Head of caudate nucleus (tissue), 42 donors: ENCODE measurements at regions of chr6 and their contacts with region 1.

Region 1: GRCh38 chr6:36442671-36443470 is at the starts of genes KCTD20 and PXT1:
- DNase-seq: peak; percentile 66 to 96 (median 90)

Region 2: DNA sequence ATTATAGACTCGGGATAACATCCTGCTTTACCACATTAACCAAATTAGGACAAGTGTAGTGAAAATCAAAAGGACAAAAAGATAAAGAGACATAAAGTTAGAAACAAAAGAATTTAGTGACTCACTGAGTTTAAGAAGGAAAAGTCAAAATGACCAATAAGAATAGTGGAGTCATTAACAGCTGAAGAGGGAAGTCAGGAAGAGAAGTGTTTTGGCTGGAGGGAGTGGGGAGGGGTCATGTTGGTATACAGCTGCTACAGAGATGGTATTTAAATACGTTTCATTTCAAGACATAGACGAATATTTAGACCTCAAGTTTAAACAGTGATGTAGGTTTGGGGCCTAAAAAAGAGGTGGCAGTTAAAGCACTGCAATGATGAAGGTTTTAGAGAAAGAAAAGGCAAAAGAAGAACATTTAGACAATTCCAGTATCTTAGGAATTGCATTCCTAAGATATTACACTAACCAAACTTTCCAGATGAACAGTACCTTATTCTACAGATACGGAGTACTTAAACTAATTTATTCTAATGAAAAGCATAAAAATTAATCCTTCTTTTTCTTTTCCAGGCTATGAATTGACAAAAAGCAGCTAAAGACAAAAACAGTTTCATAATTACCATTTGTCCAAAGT is 764.7 kb before region 1 on chr6:
- intact Hi-C with region 1: no loop called
- DNase-seq: no peak

Region 3: DNA sequence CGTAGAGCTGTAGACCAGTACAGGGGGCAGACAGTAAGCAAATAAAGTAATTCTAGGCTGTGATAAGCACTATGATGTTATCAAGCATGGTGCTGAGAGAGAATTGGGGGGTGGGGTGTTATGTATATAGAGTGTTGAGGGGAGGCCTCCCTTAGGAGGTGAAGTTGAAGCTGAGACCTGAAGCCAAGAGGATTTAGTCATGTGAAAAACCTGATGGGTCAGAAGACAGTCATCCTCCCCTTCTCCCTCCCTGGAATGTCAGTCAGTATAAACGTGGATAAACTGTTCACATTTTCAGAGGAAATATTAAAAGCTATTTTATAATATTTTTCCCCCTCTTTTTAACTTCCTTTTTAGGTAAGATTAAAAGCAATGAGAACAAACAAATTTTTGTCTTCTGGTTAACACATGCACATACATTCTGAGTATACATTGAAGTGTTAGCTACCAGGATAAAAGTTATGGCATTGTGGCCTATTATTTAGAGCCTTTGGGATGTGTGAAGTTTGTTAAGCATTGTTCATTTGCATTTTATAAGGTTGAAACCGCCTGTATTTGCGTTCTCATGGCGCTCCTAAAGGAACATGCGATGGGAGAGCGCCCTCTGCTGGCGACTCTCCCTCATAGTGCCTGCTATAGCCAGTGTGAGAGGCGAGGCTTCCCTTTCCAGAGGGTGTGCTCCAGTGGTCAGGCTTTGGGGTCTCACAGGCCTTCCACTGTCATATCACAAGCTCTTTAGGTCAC is 347.9 kb before region 1 on chr6:
- intact Hi-C with region 1: no loop called
- DNase-seq: peak; percentile 51 to 95 (median 86)

Region 4: GRCh38 chr6:36386495-36387439 is 56.1 kb before region 1 on chr6:
- intact Hi-C with region 1: no loop called
- DNase-seq: peak in 23 of 42 donors; percentile 5 to 59 (median 22)

Region 5: DNA sequence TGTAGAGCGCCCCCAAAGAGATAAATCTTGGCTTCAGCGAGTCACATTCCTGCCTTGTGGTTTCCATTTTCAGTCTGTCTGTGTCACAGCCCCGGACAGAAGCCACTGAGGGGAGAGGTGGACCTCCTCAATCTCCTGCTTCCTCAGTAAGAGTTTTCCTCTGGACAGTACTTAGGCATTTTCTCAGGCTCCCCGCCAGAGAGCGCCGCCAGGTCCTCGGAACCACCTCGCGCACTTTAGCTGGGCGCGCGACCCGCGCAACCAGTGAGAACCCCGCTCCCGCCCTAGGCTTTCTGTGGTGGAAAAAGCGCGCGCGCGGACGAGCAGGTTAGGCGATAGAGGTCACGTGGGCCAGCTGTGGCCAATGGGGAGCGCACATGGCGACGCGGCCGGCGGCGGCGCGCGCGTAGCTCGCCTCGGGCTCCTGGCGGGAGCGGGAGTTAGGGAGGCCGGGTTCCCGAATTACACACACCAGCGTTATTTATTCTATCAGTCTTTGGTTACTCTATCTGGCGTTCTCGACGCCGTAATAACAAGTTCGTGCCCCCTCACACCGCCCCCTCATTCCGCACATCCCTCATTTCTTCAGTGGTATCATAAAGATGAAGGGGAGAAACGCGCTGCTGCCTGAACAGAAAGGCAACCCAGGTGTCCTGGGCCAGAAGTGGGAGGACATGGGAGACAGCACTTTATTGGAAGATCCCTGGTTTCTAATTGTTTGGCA is 19.6 kb before region 1 on chr6:
- intact Hi-C with region 1: loop called (anchors 2 kb)
- DNase-seq: peak; percentile 94 to 100 (median 98)

Region 6: GRCh38 chr6:36478051-36478526 is 35.2 kb after region 1 on chr6:
- intact Hi-C with region 1: loop called (anchors 2 kb)
- DNase-seq: no peak

Region 7: GRCh38 chr6:36546920-36547645 is 104.2 kb after region 1 on chr6 and contains the start of gene STK38:
- intact Hi-C with region 1: loop called (anchors 5 kb)
- DNase-seq: peak; percentile 68 to 96 (median 90)

Region 8: GRCh38 chr6:36594029-36594815 is 151.4 kb after region 1 on chr6 and contains the start of gene SRSF3:
- intact Hi-C with region 1: loop called (anchors 2 kb)
- DNase-seq: peak; percentile 92 to 99 (median 98)